GM10248 (cell line): ENCODE measurements at regions of chr2 and their contacts with region 1.

Region 1: DNA sequence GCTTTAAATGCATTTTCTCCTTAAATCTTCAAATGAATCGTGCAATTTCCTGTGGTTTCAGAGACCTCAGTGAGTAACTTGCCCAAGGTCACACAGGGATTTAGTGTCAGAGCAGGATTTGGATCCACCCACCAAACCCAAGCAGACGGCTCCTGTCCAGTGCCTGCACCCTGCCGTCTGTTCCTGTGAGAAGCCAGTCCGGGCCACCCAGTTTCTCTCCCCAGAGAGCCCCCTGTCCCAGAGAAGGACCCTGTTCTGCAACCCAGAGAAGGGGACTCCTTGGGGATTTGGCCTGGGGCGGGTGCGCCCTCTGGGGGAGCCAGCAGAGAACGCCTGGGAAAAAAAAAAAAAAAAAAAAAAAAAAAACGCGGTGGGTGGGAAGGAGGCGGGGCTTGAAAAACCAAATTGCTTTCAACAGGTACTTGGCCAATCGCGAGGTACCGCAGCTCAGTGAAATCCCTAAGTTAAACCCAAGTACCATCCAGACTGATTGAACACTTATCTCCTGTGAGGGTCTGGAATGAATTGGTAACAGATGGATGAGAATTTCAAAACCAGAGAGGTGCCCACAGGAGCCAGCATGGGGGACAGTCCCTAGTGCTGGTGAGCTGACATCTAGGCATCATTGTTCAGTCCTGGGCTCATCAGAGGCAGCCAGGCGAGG is 30.9 kb upstream of the REEP1 start:
- DNase-seq: peak; percentile 79
- CTCF ChIP-seq: peak; percentile 46

Region 2: DNA sequence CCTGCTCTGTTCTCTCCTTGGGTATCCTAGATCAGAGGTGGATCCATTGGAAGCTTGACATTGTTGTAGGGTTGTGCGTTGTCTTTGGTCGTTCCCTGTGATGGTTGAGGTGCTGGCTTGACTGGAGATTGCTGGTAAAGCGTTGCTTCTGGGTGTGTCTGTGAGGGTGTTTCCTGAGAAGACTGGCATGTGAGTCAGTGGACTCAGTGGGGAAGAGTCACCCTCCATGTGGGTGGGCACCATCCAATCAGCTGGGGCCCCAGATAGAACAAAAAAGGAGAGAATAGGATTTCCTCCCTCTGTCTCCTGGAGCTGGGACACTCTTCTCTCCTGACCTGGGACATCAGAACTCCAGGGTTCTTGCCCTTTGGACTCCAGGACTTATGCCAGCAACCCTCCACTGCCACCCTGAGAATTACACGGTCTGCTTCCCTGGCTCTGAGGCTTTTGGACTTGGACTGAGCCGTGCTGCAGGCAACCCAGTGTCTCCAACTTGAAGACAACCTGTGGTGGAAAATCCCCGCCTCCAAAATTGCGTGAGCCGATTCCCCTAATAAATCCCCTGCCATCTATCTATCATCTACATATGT is 16.1 kb before region 1 on chr2:
- CTCF ChIA-PET with region 1: interaction called, 13 read pairs
- POLR2A ChIA-PET with region 1: no interaction called
- DNase-seq: no peak
- CTCF ChIP-seq: no peak